ENCODE measurements at regions of chr20 and their contacts with region 1.

Region 1: GRCh38 chr20:34538671-34539123 is 19.8 kb upstream of the MAP1LC3A start:
- DNase-seq: peak; percentile 71
- H3K4me3 Mint-ChIP-seq: no peak overlapping the region
- H3K27ac Mint-ChIP-seq: no peak overlapping the region
- H3K4me1 Mint-ChIP-seq: peaks cover 12% of the 10 kb centered on the region
- H3K27me3 Mint-ChIP-seq: no peaks in the 10 kb centered on the region

Region 2: GRCh38 chr20:34516247-34517113 is 22.2 kb before region 1 on chr20 and contains the start of gene DYNLRB1:
- CTCF ChIA-PET with region 1: interaction called, 13 read pairs
- intact Hi-C with region 1: no loop called
- DNase-seq: peak; percentile 96
- H3K4me3 Mint-ChIP-seq: peak within 1 kb of the TSS; percentile 98
- H3K27ac Mint-ChIP-seq: peak within 1 kb of the TSS; percentile 96
- H3K4me1 Mint-ChIP-seq: peaks cover 29% of the 10 kb centered on the region
- H3K27me3 Mint-ChIP-seq: no peaks in the 10 kb centered on the region
- total RNA-seq, gene DYNLRB1: 81.9 to 92.9 TPM

Region 3: DNA sequence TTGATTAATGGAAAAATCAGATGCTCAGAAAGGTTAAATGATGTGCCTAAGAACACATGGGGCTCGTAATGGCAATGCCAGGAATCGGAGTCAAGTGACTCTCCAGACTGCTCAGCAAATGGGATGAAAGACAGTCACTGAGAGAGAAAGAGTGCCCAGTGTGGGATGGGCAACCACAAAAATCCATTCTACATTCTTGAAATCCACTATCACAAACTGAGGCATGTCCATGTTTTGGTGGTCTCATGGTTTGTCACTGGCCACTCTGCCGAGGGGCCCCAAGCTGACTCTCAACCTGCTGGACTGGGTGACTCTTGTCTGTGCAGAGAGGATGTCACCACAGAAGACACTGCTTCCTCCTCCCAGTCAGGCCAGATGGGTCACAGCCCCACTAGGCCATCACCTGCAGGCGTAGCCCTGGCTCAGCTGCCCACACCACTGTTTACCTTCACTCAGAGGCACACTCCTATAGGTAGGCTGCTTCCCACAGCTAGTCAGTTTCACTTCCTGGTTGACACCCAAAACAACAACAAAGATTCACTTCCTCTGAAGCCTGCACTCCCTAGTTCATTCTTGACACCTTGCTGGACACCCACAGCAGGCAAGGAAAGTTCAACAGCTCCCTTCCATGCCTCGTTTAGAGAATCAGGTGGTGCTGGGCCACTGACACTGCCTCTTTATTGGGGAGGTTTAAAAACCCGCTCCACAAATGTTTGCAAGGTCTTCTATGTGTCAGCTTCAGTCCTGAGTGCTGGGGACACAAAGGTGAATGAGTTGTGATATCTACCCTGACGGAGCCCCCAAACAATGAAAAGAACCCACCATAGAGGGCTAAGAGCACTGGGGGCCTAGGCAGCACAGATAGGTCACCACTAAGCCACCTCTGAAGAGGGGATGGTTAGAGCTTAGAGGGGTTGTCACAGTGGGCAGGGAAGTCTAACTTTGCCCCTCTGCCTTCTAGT is 41.6 kb after region 1 on chr20:
- CTCF ChIA-PET with region 1: interaction called, 4 read pairs
- intact Hi-C with region 1: loop called (anchors 2 kb)
- DNase-seq: peak; percentile 26
- H3K4me3 Mint-ChIP-seq: no peak overlapping the region
- H3K27ac Mint-ChIP-seq: peak overlapping the region; percentile 94
- H3K4me1 Mint-ChIP-seq: peaks cover 24% of the 10 kb centered on the region
- H3K27me3 Mint-ChIP-seq: no peaks in the 10 kb centered on the region

Region 4: DNA sequence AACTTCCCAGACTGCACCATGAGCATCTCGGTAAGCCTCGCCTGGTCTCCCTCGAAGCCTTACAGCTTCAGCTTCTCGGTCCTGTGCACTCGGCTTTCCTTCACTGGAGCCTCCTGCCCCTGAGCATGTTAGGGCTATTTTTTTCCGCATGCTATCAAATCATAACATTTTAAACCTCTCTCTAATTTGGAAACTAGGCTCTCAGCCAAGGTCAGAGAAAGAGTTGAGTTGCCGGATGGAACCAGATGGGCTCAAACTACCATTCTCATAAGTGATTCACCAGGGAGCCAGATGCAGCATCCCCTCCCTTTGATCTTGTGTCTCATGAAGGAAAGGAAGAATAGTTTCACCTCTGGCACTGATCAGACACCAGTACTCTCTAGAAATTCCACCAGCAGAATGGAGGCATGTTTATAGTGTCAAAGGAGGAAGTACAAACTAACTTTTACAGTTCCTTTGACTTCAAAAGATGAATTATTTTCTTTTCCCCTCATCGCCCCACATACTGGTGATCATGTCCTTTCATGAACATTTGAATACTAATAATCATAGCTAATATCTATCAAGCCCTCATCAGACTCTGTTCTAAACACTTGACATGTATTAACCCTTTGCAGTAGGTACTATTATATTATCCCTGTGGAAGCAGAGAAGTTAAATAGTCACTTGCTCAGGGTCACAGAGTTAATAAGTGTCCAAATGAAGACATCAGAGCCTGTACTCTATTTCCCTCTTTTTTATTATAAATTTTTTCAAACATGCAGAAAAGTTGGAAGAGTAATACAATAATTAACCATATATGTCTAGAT is 66.5 kb after region 1 on chr20:
- CTCF ChIA-PET with region 1: no interaction called
- intact Hi-C with region 1: no loop called
- DNase-seq: no peak
- H3K4me3 Mint-ChIP-seq: no peak overlapping the region
- H3K27ac Mint-ChIP-seq: peak overlapping the region; percentile 4
- H3K4me1 Mint-ChIP-seq: peaks cover 5% of the 10 kb centered on the region
- H3K27me3 Mint-ChIP-seq: no peaks in the 10 kb centered on the region

Region 5: DNA sequence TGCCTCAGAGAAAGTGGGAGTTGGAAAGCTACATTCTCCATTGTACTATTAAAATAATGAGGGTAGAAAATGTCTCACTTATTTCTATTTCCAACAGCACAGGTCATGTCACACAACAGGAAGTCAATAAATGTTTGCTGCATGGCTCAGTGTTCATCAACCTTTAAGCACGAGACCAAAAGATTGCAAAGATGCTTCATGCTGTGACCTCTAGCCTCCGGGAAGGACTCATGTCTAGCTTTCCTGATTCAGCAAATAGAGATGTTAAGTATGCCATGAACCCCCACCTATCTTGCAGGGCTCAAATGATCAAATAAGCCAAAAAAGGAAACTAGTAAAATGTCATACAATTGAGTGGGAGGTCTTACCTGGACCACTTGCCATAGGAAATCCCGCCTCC is 229.4 kb after region 1 on chr20:
- CTCF ChIA-PET with region 1: interaction called, 28 read pairs
- intact Hi-C with region 1: loop called (anchors 1 kb)
- DNase-seq: no peak
- H3K4me3 Mint-ChIP-seq: no peak overlapping the region
- H3K27ac Mint-ChIP-seq: no peak overlapping the region
- H3K4me1 Mint-ChIP-seq: no peaks in the 10 kb centered on the region
- H3K27me3 Mint-ChIP-seq: no peaks in the 10 kb centered on the region